Heart left ventricle (tissue), 16 donors: ENCODE measurements at regions of chr12 and their contacts with region 1.

Region 1: DNA sequence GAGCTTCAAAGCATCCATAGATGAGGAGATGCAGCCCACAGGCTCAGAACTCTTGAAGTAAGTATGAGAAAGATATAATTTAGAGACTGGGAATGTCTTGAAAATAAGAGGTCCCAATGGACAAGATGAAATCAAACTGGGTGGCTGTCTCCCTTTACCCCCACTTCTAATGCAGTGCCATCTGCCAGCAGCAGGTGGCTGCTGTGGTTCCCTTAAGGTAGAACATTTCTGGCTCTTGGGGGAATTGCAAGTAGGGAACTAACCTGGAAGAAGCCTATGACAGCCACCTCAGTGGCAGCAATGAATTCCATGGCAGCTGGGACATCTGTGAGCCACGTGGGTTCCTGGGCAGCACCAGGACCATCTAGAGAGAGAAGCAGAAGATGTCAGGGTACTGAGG is 648 bp downstream of the ERP27 start:
- DNase-seq: no peak
- ATAC-seq: no peak
- H3K4me3 ChIP-seq: no peak overlapping the region
- H3K27ac ChIP-seq: no peak overlapping the region
- H3K4me1 ChIP-seq: peaks cover 0 to 4% (median 0%) of the 10 kb centered on the region in 12 donors
- H3K27me3 ChIP-seq: no peaks in the 10 kb centered on the region
- CTCF ChIP-seq: no peak
- POLR2A ChIP-seq: no peak

Region 2: DNA sequence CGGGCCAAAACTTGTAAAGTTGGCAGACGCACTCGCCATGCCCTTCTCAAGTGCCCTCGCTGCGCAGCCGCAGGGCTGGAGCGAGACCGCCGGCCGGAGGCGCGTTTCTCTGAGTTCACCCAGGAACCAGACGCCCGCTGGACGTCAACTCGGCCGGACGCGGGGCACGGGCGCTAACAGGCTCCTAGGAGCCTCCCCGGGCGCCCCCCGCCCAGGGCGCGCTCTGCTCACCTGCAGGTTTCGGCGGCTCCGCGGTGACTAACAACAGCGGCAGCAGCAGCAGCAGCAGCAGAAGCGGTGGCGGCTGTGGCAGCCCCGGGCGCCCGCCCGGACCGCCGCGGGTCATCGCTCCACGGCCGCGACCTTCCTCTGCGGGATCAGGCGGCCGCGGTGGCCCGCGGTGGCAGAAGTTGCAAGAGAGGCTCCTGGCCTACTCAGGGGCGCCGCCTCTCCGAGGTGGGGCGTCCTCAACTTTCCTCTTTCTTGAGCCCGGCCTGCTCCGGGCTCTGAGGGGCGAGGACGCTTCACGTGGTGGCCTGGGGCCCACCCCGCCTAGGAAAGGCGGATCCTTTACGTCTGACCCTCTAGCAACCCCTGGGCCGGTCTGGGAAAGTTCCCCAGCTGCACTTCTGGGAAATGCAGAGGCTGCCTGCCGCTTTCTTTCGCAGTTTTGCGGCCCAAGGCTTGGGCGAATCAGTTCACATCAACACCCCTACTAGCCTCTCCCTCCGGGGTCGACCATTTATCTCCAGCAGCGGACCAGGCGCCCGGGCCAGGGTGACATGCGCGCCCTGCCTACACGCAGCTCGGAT is 370.1 kb before region 1 on chr12 and contains the start of gene PLBD1:
- intact Hi-C with region 1: no loop called
- DNase-seq: peak; percentile 77 to 91 (median 88)
- ATAC-seq: peak; percentile 81 to 95 (median 92)
- H3K4me3 ChIP-seq: peak within 1 kb of the TSS; percentile 45 to 79 (median 68)
- H3K27ac ChIP-seq: peak within 1 kb of the TSS; percentile 67 to 97 (median 92)
- H3K4me1 ChIP-seq: peaks cover 0 to 33% (median 3%) of the 10 kb centered on the region in 12 donors
- H3K27me3 ChIP-seq: no peaks in the 10 kb centered on the region
- CTCF ChIP-seq: peak in 1 of 12 donors; percentile 11
- POLR2A ChIP-seq: peak in 1 of 2 donors; percentile 78
- total RNA-seq, gene PLBD1: 11.9 to 49.1 (median 26.5) TPM

Region 3: GRCh38 chr12:14890701-14891100 is 47.0 kb before region 1 on chr12:
- intact Hi-C with region 1: no loop called
- DNase-seq: no peak
- ATAC-seq: no peak
- H3K4me3 ChIP-seq: no peak overlapping the region
- H3K27ac ChIP-seq: peak overlapping the region in 3 of 12 donors; percentile 5 to 40 (median 26)
- H3K4me1 ChIP-seq: peaks cover 0 to 40% (median 14%) of the 10 kb centered on the region in 12 donors
- H3K27me3 ChIP-seq: no peaks in the 10 kb centered on the region
- CTCF ChIP-seq: no peak
- POLR2A ChIP-seq: no peak

Region 4: GRCh38 chr12:14901228-14901562 is 36.5 kb before region 1 on chr12:
- intact Hi-C with region 1: loop called in 1 of 10 experiments (anchors 5 kb)
- DNase-seq: peak in 4 of 5 donors; percentile 25 to 56 (median 40)
- ATAC-seq: peak in 2 of 4 donors; percentile 57 to 58
- H3K4me3 ChIP-seq: no peak overlapping the region
- H3K27ac ChIP-seq: peak overlapping the region in 9 of 12 donors; percentile 2 to 77 (median 40)
- H3K4me1 ChIP-seq: peaks cover 0 to 70% (median 41%) of the 10 kb centered on the region in 12 donors
- H3K27me3 ChIP-seq: no peaks in the 10 kb centered on the region
- CTCF ChIP-seq: peak in 7 of 12 donors; percentile 13 to 47 (median 35)
- POLR2A ChIP-seq: no peak

Region 5: GRCh38 chr12:14989790-14990189 is 52.1 kb after region 1 on chr12:
- intact Hi-C with region 1: loop called in 1 of 10 experiments (anchors 10 kb)
- DNase-seq: no peak
- ATAC-seq: no peak
- H3K4me3 ChIP-seq: no peak overlapping the region
- H3K27ac ChIP-seq: peak overlapping the region in 2 of 12 donors; percentile 23 to 35
- H3K4me1 ChIP-seq: peaks cover 0 to 36% (median 0%) of the 10 kb centered on the region in 12 donors
- H3K27me3 ChIP-seq: no peaks in the 10 kb centered on the region
- CTCF ChIP-seq: no peak
- POLR2A ChIP-seq: no peak